ENCODE measurements at regions of chr7 and their contacts with region 1.

Region 1: GRCh38 chr7:38825721-38826440 is 83.1 kb downstream of the VPS41 start:
- DNase-seq: no peak
- H3K4me3 ChIP-seq: no peak overlapping the region
- H3K27ac ChIP-seq: peak overlapping the region in 1 of 4 donors; percentile 9
- H3K4me1 ChIP-seq: peaks cover 0 to 6% (median 2%) of the 10 kb centered on the region in 4 donors
- H3K27me3 ChIP-seq: no peaks in the 10 kb centered on the region
- CTCF ChIP-seq: no peak
- EP300 ChIP-seq: no peak
- POLR2A ChIP-seq: no peak

Region 2: GRCh38 chr7:39042670-39043069 is 216.8 kb after region 1 on chr7:
- in situ Hi-C with region 1: loop called in 1 of 4 experiments (anchors 25 kb)
- intact Hi-C with region 1: no loop called
- DNase-seq: no peak
- H3K4me3 ChIP-seq: no peak overlapping the region
- H3K27ac ChIP-seq: no peak overlapping the region
- H3K4me1 ChIP-seq: no peaks in the 10 kb centered on the region
- H3K27me3 ChIP-seq: no peaks in the 10 kb centered on the region
- CTCF ChIP-seq: no peak
- EP300 ChIP-seq: no peak
- POLR2A ChIP-seq: no peak

Region 3: DNA sequence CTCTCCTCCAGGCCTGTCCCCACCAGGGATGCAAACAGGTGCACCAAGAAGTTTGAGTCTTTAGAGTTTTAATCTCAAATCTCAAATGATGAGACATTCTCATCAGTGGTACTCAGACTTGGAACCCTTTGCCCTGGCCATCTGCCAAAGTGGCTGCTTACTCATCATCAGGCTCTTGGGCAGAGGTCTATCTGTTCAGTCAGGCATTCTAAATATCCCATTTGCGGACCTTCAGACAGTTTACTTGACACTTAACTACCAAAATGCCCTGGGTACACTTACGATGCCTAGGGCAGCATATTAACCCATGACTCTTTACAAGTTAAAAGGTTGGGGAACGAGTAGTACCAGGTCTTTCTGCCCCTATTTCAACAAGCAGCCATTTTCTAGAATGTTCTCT is 679.1 kb after region 1 on chr7:
- in situ Hi-C with region 1: loop called in 1 of 4 experiments (anchors 25 kb)
- intact Hi-C with region 1: no loop called
- DNase-seq: no peak
- H3K4me3 ChIP-seq: no peak overlapping the region
- H3K27ac ChIP-seq: no peak overlapping the region
- H3K4me1 ChIP-seq: no peaks in the 10 kb centered on the region
- H3K27me3 ChIP-seq: no peaks in the 10 kb centered on the region
- CTCF ChIP-seq: no peak
- EP300 ChIP-seq: no peak
- POLR2A ChIP-seq: no peak

Region 4: GRCh38 chr7:40000734-40001315 is 1174.9 kb after region 1 on chr7:
- in situ Hi-C with region 1: no loop called
- intact Hi-C with region 1: loop called (anchors 5 kb)
- DNase-seq: no peak
- H3K4me3 ChIP-seq: no peak overlapping the region
- H3K27ac ChIP-seq: no peak overlapping the region
- H3K4me1 ChIP-seq: no peaks in the 10 kb centered on the region
- H3K27me3 ChIP-seq: no peaks in the 10 kb centered on the region
- CTCF ChIP-seq: no peak
- EP300 ChIP-seq: no peak
- POLR2A ChIP-seq: no peak